Heart left ventricle (tissue), 16 donors: ENCODE measurements at regions of chr18 and their contacts with region 1.

Region 1: DNA sequence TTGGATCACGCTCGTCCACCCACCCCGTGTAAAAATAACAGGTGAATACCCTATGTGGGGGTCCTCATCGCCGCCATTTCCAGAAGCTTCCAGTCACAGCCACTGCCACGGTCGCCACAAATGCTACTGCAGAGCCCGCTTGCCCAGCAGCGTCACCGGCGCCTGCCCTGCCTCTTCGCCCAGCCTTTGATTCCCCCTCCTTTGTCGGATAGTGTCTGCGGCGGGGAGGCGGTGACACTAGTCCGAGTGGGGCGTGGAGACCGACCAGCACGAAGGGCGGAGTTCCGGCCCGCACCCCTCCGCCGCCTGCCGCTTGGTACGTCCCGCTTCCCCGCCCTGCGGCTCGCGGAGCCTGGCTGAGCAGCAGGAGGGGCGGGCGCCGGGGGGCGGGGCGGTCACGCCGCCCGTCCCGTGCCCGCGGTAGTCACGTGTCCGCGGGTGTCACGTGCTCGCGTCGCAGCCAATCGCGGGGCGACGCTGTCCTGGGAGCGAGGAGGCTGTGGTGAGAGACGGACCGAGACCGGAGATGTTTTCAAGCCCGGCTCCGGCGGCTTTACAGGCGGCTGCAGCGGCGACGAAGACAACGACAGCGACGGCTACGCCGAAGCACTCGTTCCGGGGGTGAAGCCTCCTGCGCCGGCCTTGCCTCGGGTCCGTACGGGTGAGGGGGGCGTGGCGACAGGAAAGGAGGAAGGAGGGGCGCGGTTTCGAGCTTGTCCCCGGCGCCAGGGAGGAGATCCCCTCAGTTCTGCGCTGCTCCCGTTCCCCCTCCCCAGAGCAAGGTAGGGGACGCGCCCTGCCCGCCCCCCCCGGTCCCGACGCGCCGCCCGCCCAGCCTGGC is at the start of gene ANKRD12:
- DNase-seq: peak; percentile 98 to 99 (median 98)
- ATAC-seq: peak; percentile 94 to 98 (median 96)
- H3K4me3 ChIP-seq: peak within 1 kb of the TSS; percentile 62 to 96 (median 82)
- H3K27ac ChIP-seq: peak within 1 kb of the TSS; percentile 97 to 99 (median 98)
- H3K4me1 ChIP-seq: peaks cover 6 to 60% (median 43%) of the 10 kb centered on the region in 12 donors
- H3K27me3 ChIP-seq: no peaks in the 10 kb centered on the region
- CTCF ChIP-seq: peak in 1 of 12 donors; percentile 4
- POLR2A ChIP-seq: peak in 1 of 2 donors; percentile 68
- total RNA-seq, gene ANKRD12: 18.6 to 70.9 (median 53.8) TPM

Region 2: GRCh38 chr18:8654503-8655451 is 481.8 kb before region 1 on chr18:
- intact Hi-C with region 1: no loop called
- DNase-seq: no peak
- ATAC-seq: no peak
- H3K4me3 ChIP-seq: no peak overlapping the region
- H3K27ac ChIP-seq: no peak overlapping the region
- H3K4me1 ChIP-seq: peaks cover 0 to 6% (median 0%) of the 10 kb centered on the region in 12 donors
- H3K27me3 ChIP-seq: peaks cover 0 to 8% (median 0%) of the 10 kb centered on the region in 9 donors
- CTCF ChIP-seq: peak; percentile 69 to 89 (median 78)
- POLR2A ChIP-seq: no peak

Region 3: DNA sequence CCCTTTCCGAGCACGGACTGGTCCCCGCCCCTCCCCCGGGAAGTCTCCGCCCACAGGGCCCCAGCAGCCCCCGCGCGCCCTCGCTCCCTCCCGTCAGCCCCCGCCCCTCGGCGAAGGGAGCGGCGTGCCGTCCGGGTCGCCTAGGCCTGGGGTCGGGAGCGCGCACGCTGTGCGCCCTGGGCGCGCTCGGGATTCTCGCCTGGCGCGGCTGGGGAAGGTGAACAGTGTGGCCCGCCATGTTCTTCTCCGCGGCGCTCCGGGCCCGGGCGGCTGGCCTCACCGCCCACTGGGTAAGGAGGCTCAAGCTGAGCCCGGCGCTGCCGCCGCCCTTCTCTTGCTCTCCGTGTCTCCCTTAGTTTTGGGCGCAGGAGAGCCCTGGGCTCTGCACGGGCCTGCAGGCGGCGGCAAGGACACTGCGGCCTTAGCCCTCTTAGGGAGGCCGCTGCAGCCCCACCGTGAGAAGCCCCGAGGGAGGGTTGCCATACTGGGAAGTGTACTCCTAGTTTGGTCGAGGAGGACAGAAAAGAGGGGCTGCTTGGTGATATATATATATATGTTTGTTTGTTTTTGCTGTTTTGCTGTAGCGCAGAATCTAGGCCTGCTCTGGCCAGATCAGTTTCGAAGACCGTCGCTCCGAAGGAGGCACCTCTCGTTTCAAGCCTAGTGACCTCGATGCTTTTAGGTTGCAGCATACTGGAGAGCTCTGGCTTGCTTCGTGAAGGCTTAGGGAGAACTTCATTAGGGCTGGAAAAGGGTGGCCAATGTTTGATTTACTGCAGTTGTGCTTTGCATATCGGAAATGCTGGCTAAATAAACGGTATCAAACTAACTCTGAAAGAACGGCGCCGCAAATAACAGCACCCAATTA is 33.8 kb before region 1 on chr18 and contains the start of gene NDUFV2:
- intact Hi-C with region 1: loop called (anchors 1 to 5 kb)
- DNase-seq: peak; percentile 98 to 99 (median 98)
- ATAC-seq: peak; percentile 98 to 99 (median 99)
- H3K4me3 ChIP-seq: peak within 1 kb of the TSS; percentile 27 to 89 (median 78)
- H3K27ac ChIP-seq: peak within 1 kb of the TSS; percentile 89 to 99 (median 95)
- H3K4me1 ChIP-seq: peaks cover 11 to 52% (median 48%) of the 10 kb centered on the region in 12 donors
- H3K27me3 ChIP-seq: no peaks in the 10 kb centered on the region
- CTCF ChIP-seq: peak in 1 of 12 donors; percentile 24
- POLR2A ChIP-seq: peak in 1 of 2 donors; percentile 88
- total RNA-seq, gene NDUFV2: 236 to 469 (median 407) TPM

Region 4: GRCh38 chr18:9474983-9475642 is 338.6 kb after region 1 on chr18 and contains the start of gene RALBP1:
- intact Hi-C with region 1: loop called in 1 of 10 experiments (anchors 5 kb)
- DNase-seq: peak; percentile 99 to 100 (median 100)
- ATAC-seq: peak; percentile 99
- H3K4me3 ChIP-seq: peak within 1 kb of the TSS; percentile 81 to 99 (median 92)
- H3K27ac ChIP-seq: peak within 1 kb of the TSS; percentile 89 to 98 (median 94)
- H3K4me1 ChIP-seq: peaks cover 0 to 30% (median 16%) of the 10 kb centered on the region in 12 donors
- H3K27me3 ChIP-seq: no peaks in the 10 kb centered on the region
- CTCF ChIP-seq: peak in 4 of 12 donors; percentile 35 to 47 (median 43)
- POLR2A ChIP-seq: peak; percentile 51 to 90
- total RNA-seq, gene RALBP1: 36.9 to 91.1 (median 50.3) TPM